Heart left ventricle (tissue), 16 donors: ENCODE measurements at regions of chr2 and their contacts with region 1.

Region 1: DNA sequence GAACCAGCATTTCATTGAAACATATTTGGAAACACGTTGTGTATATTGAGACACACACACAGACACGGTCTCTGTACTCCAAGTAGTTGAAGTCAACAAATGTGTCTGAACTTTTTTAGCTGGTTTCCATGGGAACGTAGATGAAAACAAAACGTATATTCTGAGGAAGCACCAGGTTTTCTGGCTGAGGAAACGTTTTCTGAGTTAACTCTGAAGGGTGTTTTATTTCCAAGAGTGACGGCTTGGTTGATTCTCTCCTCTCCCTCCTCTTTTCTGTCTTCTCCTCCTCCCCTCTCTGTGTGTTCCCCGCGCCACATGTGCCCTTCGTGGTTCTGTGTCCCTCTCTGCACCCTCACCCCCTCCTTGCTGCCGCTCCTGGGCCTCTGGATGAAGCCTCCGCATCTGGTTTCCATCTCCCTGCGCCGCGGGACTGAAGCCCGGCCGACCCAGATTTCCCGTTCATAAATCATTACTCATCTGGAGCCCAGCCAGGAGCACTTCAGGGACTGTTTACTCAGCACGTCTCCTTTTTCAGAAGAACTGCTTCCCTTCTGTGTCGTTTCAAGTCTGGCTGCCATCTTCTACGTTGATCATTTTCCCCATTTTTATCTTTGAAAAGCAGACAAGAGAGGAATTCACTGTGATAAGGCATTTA is 122.7 kb downstream of the COL6A3 start:
- DNase-seq: peak; percentile 93 to 99 (median 97)
- ATAC-seq: peak; percentile 95 to 97 (median 97)
- H3K4me3 ChIP-seq: peak overlapping the region in 5 of 12 donors; percentile 3 to 27 (median 11)
- H3K27ac ChIP-seq: peak overlapping the region; percentile 74 to 92 (median 84)
- H3K4me1 ChIP-seq: peaks cover 0 to 41% (median 27%) of the 10 kb centered on the region in 12 donors
- H3K27me3 ChIP-seq: no peaks in the 10 kb centered on the region
- CTCF ChIP-seq: no peak
- POLR2A ChIP-seq: peak in 1 of 2 donors; percentile 6

Region 2: GRCh38 chr2:237207646-237208045 is 83.6 kb before region 1 on chr2:
- intact Hi-C with region 1: loop called in 3 of 10 experiments (anchors 1 to 5 kb)
- DNase-seq: peak; percentile 78 to 92 (median 80)
- ATAC-seq: peak; percentile 86 to 91 (median 90)
- H3K4me3 ChIP-seq: no peak overlapping the region
- H3K27ac ChIP-seq: peak overlapping the region; percentile 28 to 85 (median 76)
- H3K4me1 ChIP-seq: peaks cover 0 to 58% (median 31%) of the 10 kb centered on the region in 12 donors
- H3K27me3 ChIP-seq: peaks cover 0 to 3% (median 0%) of the 10 kb centered on the region in 9 donors
- CTCF ChIP-seq: no peak
- POLR2A ChIP-seq: no peak

Region 3: GRCh38 chr2:237327175-237327950 is 36.1 kb after region 1 on chr2:
- intact Hi-C with region 1: no loop called
- DNase-seq: peak in 1 of 5 donors; percentile 60
- ATAC-seq: peak in 3 of 4 donors; percentile 31 to 61 (median 49)
- H3K4me3 ChIP-seq: no peak overlapping the region
- H3K27ac ChIP-seq: peak overlapping the region in 11 of 12 donors; percentile 12 to 92 (median 58)
- H3K4me1 ChIP-seq: peaks cover 0 to 51% (median 5%) of the 10 kb centered on the region in 12 donors
- H3K27me3 ChIP-seq: no peaks in the 10 kb centered on the region
- CTCF ChIP-seq: no peak
- POLR2A ChIP-seq: no peak